Activated CD8-positive, alpha-beta T cell treated with anti-CD3 and anti-CD28 coated beads for 36 hours (primary cell): ENCODE measurements at regions of chr20 and their contacts with region 1.

Region 1: DNA sequence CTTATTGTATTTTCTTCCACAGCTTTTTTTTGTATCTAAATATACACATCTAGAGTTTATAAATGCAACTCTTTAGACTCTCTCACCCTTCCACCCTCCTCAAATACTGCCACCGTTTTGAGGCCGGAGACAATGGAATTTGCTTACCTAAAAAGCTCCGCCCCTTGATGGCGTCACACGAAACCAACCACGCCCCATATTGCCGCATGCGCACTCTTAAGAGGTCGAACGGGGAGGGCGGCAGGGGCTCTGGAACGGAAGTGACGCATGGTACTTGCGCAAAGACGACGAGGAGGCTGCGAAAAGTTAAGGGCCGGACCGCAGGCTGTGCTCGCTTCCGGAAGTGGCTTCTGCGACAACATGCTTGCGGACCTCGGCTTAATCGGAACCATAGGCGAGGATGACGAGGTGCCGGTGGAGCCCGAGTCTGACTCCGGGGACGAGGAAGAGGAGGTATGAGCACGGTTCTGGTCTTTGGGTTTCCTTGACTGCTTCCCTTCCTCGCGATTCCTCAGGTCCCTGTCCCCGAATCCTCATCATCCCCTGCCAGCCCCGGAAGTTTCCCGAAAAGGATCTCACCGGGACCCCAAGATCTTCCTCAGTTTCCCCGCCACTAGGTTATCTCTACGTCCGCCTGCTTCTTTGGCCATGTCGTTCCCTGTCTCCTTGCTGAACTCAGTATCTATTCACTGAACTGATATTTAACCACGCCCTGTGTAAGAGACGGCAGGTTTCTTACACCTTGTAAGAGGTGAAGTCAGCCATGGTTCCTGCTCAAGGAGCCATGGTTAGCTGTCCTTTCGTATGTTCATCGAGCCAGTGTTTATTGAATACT is at the start of gene DDX27:
- DNase-seq: peak; percentile 99
- ATAC-seq: peak; percentile 91
- H3K4me3 Mint-ChIP-seq: peak within 1 kb of the TSS; percentile 88
- H3K27ac Mint-ChIP-seq: peak within 1 kb of the TSS; percentile 95
- H3K4me1 Mint-ChIP-seq: peaks cover 24% of the 10 kb centered on the region
- H3K27me3 Mint-ChIP-seq: no peaks in the 10 kb centered on the region
- CTCF ChIP-seq: no peak
- total RNA-seq, gene DDX27: 45.2 to 45.9 TPM

Region 2: GRCh38 chr20:49132995-49133478 is 86.3 kb before region 1 on chr20:
- CTCF ChIA-PET with region 1: interaction called, 123 read pairs
- POLR2A ChIA-PET with region 1: interaction called, 5 read pairs
- intact Hi-C with region 1: loop called (anchors 2 kb)
- DNase-seq: no peak
- ATAC-seq: no peak
- H3K4me3 Mint-ChIP-seq: no peak overlapping the region
- H3K27ac Mint-ChIP-seq: peak overlapping the region; percentile 17
- H3K4me1 Mint-ChIP-seq: peaks cover 2% of the 10 kb centered on the region
- H3K27me3 Mint-ChIP-seq: no peaks in the 10 kb centered on the region
- CTCF ChIP-seq: peak; percentile 56

Region 3: DNA sequence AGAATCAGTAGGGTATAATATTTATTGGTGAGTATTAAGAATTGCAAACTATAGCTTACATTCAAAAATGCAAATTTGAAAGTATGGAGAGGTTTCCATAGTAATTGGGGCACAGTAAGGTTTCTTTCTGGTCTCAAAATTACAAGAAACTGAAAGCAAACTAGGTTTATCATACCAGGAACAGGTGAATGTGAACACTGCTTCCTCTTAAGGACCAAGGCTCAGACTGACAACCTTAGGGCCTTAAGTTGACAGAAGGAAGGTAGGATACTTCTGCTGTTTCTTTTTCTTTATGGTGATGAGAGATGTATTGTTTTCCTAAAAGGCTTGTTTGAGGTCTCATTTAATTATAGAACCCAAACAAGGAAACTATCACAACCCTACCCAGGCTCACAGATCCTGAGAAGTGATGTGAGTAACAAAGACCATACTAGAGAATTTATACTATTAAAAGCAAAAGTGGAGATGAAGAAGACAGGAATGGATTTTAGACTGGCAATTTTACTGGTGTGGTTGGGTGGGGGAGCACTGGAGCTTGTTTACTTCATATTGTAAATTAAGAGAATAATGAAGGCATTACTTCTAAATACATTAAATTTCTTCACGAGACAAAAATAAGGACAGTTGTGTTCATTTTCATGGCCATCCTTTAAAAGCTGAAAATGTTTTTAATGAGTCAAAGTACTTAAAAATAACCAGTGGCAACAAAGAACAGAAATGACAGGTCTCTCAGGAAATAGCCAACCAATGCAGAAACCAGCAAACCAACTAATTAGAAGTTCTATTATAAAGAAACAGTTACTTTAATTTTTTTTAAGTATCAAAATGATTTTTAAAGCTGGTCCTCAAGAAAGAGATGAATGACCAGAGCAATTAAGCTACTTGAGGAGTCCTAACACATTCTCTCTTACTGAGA is 52.5 kb before region 1 on chr20:
- CTCF ChIA-PET with region 1: interaction called, 59 read pairs
- POLR2A ChIA-PET with region 1: no interaction called
- intact Hi-C with region 1: no loop called
- DNase-seq: no peak
- ATAC-seq: peak; percentile 80
- H3K4me3 Mint-ChIP-seq: peak overlapping the region; percentile 8
- H3K27ac Mint-ChIP-seq: peak overlapping the region; percentile 86
- H3K4me1 Mint-ChIP-seq: peaks cover 66% of the 10 kb centered on the region
- H3K27me3 Mint-ChIP-seq: no peaks in the 10 kb centered on the region
- CTCF ChIP-seq: no peak

Region 4: DNA sequence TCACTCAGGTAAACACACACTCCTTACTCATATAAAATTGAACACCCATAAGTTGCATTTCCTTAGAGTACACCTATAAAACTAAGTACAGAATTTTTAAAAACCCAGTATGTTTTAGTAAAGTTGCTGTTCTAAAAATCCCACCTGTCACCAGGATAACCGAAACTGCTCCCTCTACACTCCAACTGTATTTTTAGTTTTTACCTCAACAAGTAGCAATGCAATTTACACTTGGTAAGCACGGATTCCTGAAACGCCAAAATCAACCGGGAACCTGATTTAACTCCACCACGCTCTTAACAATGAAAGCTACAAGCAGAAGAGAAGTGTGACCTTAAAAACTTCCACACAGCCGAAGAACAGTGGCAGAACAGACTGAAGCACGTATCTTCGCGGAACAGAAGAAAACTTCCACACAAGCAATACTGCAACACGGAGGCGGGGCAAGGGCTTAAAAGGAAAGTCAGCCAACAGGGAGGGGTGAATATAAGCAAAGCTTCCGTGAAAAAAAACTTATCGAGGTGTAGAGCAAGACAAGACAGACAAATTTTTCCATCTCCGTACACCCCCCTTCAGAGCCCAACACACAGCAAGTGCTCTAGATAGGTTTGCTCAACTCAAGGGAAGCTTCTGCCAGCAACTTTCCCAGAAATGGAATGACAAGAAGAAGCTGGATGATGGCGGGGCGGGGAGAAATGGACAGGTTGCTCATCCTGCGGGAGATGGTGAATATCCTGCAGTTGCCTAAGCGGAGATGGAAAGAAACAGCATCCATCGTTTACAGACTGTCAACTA is 32.6 kb before region 1 on chr20:
- CTCF ChIA-PET with region 1: interaction called, 36 read pairs
- POLR2A ChIA-PET with region 1: interaction called, 5 read pairs
- intact Hi-C with region 1: loop called (anchors 5 kb)
- DNase-seq: peak; percentile 87
- ATAC-seq: peak; percentile 52
- H3K4me3 Mint-ChIP-seq: peak overlapping the region; percentile 89
- H3K27ac Mint-ChIP-seq: peak overlapping the region; percentile 95
- H3K4me1 Mint-ChIP-seq: peaks cover 45% of the 10 kb centered on the region
- H3K27me3 Mint-ChIP-seq: no peaks in the 10 kb centered on the region
- CTCF ChIP-seq: no peak

Region 5: GRCh38 chr20:49207076-49207475 is 12.2 kb before region 1 on chr20:
- CTCF ChIA-PET with region 1: interaction called, 49 read pairs
- POLR2A ChIA-PET with region 1: no interaction called
- intact Hi-C with region 1: no loop called
- DNase-seq: peak; percentile 45
- ATAC-seq: peak; percentile 56
- H3K4me3 Mint-ChIP-seq: no peak overlapping the region
- H3K27ac Mint-ChIP-seq: no peak overlapping the region
- H3K4me1 Mint-ChIP-seq: no peaks in the 10 kb centered on the region
- H3K27me3 Mint-ChIP-seq: no peaks in the 10 kb centered on the region
- CTCF ChIP-seq: peak; percentile 26

Region 6: GRCh38 chr20:49256261-49256660 is 37.0 kb after region 1 on chr20:
- CTCF ChIA-PET with region 1: interaction called, 11 read pairs
- POLR2A ChIA-PET with region 1: interaction called, 4 read pairs
- intact Hi-C with region 1: no loop called
- DNase-seq: no peak
- ATAC-seq: no peak
- H3K4me3 Mint-ChIP-seq: no peak overlapping the region
- H3K27ac Mint-ChIP-seq: no peak overlapping the region
- H3K4me1 Mint-ChIP-seq: peaks cover 15% of the 10 kb centered on the region
- H3K27me3 Mint-ChIP-seq: no peaks in the 10 kb centered on the region
- CTCF ChIP-seq: no peak

Region 7: GRCh38 chr20:49310705-49311104 is 91.4 kb after region 1 on chr20:
- CTCF ChIA-PET with region 1: no interaction called
- POLR2A ChIA-PET with region 1: no interaction called
- intact Hi-C with region 1: no loop called
- DNase-seq: no peak
- ATAC-seq: peak; percentile 66
- H3K4me3 Mint-ChIP-seq: no peak overlapping the region
- H3K27ac Mint-ChIP-seq: peak overlapping the region; percentile 44
- H3K4me1 Mint-ChIP-seq: peaks cover 23% of the 10 kb centered on the region
- H3K27me3 Mint-ChIP-seq: peaks cover 1% of the 10 kb centered on the region
- CTCF ChIP-seq: no peak